Heart right ventricle (tissue), 16 donors: ENCODE measurements at regions of chr17 and their contacts with region 1.

Region 1: DNA sequence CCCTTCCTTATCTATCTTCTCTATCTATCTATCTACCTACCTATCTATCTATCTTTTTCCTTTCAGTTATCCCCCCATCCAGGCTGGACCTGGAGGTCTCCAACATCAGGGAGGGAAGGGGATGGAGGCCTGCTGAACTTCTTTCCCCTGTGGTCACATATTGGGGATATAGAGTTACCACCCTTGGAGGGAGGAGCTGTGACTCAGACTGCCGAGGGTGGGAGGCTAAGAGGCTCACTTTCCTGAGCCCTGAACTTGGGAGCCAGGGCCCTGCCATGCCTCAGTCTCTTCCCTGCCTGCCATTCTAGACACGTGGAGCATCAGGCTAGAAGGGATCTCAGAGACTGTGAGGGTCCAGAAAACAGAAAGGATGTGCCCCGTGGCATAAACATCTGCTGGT is 8.4 kb downstream of the LRRC3C start:
- DNase-seq: no peak
- ATAC-seq: no peak
- H3K4me3 ChIP-seq: no peak overlapping the region
- H3K27ac ChIP-seq: peak overlapping the region in 1 of 10 donors; percentile 1
- H3K4me1 ChIP-seq: peaks cover 0 to 48% (median 15%) of the 10 kb centered on the region in 9 donors
- H3K27me3 ChIP-seq: no peaks in the 10 kb centered on the region
- CTCF ChIP-seq: no peak

Region 2: DNA sequence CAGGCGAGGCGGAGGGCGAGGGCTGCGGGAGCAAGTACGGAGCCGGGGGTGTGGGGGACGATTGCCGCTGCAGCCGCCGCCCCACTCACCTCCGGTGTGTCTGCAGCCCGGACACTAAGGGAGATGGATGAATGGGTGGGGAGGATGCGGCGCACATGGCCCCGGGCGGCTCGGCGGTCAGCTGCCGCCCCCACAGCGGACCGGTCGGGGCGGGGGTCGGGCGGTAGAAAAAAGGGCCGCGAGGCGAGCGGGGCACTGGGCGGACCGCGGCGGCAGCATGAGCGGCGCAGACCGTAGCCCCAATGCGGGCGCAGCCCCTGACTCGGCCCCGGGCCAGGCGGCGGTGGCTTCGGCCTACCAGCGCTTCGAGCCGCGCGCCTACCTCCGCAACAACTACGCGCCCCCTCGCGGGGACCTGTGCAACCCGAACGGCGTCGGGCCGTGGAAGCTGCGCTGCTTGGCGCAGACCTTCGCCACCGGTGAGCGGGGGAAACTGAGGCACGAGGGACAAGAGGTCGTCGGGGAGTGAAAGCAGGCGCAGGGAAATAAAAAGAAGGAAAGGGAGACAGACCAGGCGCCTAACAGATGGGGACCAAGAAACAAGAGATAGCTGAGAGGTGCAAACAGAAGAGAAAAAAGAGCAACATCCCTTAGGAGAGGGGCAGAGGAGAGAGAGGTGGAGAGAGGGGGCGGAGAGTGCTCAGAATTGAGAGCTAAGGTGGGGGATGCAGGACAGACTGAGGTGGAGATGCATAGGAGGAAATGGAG is 267.5 kb before region 1 on chr17 and contains the start of gene PNMT:
- intact Hi-C with region 1: no loop called
- DNase-seq: peak; percentile 68 to 83
- ATAC-seq: peak in 3 of 8 donors; percentile 2 to 31 (median 6)
- H3K4me3 ChIP-seq: peak within 1 kb of the TSS; percentile 24 to 77 (median 52)
- H3K27ac ChIP-seq: peak within 1 kb of the TSS; percentile 88 to 98 (median 94)
- H3K4me1 ChIP-seq: peaks cover 25 to 78% (median 51%) of the 10 kb centered on the region in 9 donors
- H3K27me3 ChIP-seq: peaks cover 0 to 59% (median 8%) of the 10 kb centered on the region in 7 donors
- CTCF ChIP-seq: peak; percentile 52 to 81 (median 65)
- total RNA-seq, gene PNMT: 2.7 to 12.8 (median 3.9) TPM

Region 3: GRCh38 chr17:39813631-39814030 is 122.3 kb before region 1 on chr17:
- intact Hi-C with region 1: no loop called
- DNase-seq: no peak
- ATAC-seq: no peak
- H3K4me3 ChIP-seq: no peak overlapping the region
- H3K27ac ChIP-seq: peak overlapping the region in 1 of 10 donors; percentile 63
- H3K4me1 ChIP-seq: peaks cover 0 to 2% (median 0%) of the 10 kb centered on the region in 9 donors
- H3K27me3 ChIP-seq: peaks cover 0 to 26% (median 2%) of the 10 kb centered on the region in 7 donors
- CTCF ChIP-seq: no peak

Region 4: DNA sequence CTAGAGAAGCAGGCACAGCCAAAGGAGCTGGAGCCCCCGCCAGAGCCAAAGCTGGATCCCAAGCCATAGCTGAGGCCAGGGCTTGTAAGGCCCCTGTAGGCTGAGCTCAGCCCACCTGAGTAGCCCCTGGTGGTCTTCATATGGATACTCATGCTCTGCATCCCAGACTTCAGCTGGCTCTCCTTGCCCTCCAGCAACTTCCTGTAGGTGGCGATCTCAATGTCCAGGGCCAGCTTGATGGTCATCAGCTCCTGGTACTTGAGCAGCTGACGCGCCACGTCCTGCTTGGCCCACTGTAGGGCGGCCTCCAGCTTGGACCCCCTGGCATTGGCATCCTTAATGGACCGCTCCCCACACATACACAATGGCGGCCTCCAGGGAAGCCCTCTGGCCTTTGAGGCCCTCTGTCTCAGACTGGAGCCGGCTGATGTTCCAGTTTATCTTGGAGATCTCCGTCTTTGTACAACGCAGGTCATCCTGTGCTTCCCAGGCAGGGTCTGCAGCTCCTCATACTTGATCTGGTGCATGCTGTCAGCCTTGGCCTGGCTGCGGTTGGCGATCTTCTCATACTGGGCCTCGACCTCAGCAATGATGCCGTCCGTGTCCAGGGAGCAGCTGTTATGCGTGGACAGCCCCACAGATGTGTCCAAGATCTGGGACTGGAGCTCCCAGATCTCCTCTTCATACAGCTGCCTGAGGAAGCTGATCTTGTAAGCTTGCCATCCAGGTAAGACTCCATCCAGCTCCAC is 100.7 kb before region 1 on chr17:
- intact Hi-C with region 1: no loop called
- DNase-seq: no peak
- ATAC-seq: no peak
- H3K4me3 ChIP-seq: no peak overlapping the region
- H3K27ac ChIP-seq: no peak overlapping the region
- H3K4me1 ChIP-seq: no peaks in the 10 kb centered on the region
- H3K27me3 ChIP-seq: peaks cover 0 to 15% (median 2%) of the 10 kb centered on the region in 7 donors
- CTCF ChIP-seq: no peak

Region 5: GRCh38 chr17:39952680-39953470 is 17.0 kb after region 1 on chr17:
- intact Hi-C with region 1: loop called in 1 of 10 experiments (anchors 2 kb)
- DNase-seq: peak; percentile 99 to 100
- ATAC-seq: peak; percentile 91 to 96 (median 94)
- H3K4me3 ChIP-seq: peak overlapping the region in 9 of 10 donors; percentile 35 to 56 (median 51)
- H3K27ac ChIP-seq: peak overlapping the region in 9 of 10 donors; percentile 54 to 76 (median 63)
- H3K4me1 ChIP-seq: peaks cover 0 to 31% (median 11%) of the 10 kb centered on the region in 9 donors
- H3K27me3 ChIP-seq: no peaks in the 10 kb centered on the region
- CTCF ChIP-seq: no peak

Region 6: DNA sequence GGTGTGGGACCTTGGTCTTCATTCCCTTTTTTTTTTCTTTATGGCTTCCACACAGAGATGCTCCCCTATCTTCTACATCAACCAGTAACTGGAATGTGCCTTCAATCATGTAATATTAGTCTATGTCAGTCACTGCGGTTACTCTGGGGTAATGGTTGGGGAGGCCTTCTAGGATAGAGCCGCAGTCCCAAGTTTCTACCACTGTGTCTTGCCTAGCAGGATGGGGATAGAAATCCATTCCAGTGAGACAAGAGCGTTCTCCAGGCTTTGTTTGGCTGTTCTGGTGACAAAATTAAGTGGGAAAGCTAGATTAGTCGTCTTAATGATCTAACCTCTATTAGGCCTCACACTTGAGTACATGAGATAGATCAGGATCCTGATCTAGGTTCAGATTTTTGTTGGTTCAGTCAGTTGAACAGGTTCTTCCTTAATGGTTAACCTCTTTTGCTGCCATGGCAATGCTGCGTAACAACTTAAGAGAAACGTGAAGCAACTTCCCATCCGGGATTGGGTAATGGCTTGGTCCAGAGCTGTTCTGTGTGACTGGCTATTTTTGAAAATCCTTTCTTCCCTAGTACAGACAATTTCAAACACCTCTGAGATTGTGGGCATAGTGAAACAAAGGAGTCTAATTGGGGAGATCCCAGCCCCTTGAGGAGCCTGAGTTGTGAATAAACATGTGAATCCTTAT is 194.6 kb after region 1 on chr17:
- intact Hi-C with region 1: no loop called
- DNase-seq: peak in 1 of 2 donors; percentile 38
- ATAC-seq: peak in 4 of 8 donors; percentile 28 to 72 (median 58)
- H3K4me3 ChIP-seq: no peak overlapping the region
- H3K27ac ChIP-seq: peak overlapping the region in 3 of 10 donors; percentile 33 to 86 (median 44)
- H3K4me1 ChIP-seq: peaks cover 0 to 24% (median 3%) of the 10 kb centered on the region in 9 donors
- H3K27me3 ChIP-seq: no peaks in the 10 kb centered on the region
- CTCF ChIP-seq: no peak